ENCODE measurements at regions of chr4 and their contacts with region 1.

Region 1: DNA sequence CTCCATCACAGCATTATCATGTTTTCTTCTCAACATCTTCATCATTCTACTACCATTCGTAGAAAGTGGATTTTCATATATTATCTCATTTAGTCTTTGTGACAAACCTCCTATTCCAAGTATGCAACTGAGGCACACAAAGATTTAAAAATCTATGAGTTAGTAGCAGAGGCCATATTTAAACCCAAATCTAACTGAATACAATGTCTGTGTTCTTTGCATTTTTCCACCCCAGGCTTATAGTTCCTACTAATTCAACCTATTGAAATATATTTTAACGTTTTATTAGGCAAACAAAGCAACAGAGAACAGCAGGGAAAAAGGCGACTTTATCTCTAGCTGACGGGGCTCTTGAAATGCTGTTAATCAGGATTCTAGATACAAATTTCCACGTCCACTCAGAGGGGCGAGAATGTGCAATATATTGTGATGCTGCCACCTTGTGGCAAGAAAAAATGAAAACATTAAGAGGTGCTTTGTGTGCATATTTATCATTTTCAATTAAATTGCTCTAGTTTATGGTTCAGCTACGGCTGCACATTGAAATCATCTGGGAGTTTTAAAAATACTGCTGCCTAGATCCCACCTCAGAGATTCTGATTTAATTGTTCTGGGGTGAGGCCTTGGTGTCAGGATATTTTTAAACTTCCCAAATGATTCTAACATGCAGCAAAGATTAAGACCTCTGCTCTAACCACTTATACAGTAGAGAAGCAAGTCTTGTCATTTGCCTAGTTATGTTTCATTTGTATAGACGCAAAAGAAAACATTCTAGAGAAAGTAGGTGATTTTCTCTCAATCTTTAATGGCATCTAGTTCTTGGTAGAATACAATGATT is 315.9 kb downstream of the MAPK10 start:
- DNase-seq: no peak
- ATAC-seq: peak; percentile 79
- H3K4me3 ChIP-seq: no peak overlapping the region
- H3K27ac ChIP-seq: no peak overlapping the region
- H3K4me1 ChIP-seq: no peaks in the 10 kb centered on the region
- H3K27me3 ChIP-seq: no peaks in the 10 kb centered on the region
- CTCF ChIP-seq: peak; percentile 30 to 58 (median 54); a peak in 5 of 6 replicates
- EP300 ChIP-seq: no peak
- POLR2A ChIP-seq: no peak
- RAD21 ChIP-seq: peak; percentile 69

Region 2: GRCh38 chr4:85084380-85085094 is 959.4 kb before region 1 on chr4:
- CTCF ChIA-PET with region 1: interaction called, 19 read pairs
- POLR2A ChIA-PET with region 1: no interaction called
- RAD21 ChIA-PET with region 1: no interaction called
- SMC1A ChIA-PET with region 1: no interaction called
- in situ Hi-C with region 1: no loop called
- intact Hi-C with region 1: loop called (anchors 10 kb)
- DNase-seq: no peak
- ATAC-seq: peak; percentile 84
- H3K4me3 ChIP-seq: no peak overlapping the region
- H3K27ac ChIP-seq: no peak overlapping the region
- H3K4me1 ChIP-seq: no peaks in the 10 kb centered on the region
- H3K27me3 ChIP-seq: no peaks in the 10 kb centered on the region
- CTCF ChIP-seq: peak; percentile 58 to 60 (median 60)
- EP300 ChIP-seq: no peak
- POLR2A ChIP-seq: no peak
- RAD21 ChIP-seq: peak; percentile 58

Region 3: DNA sequence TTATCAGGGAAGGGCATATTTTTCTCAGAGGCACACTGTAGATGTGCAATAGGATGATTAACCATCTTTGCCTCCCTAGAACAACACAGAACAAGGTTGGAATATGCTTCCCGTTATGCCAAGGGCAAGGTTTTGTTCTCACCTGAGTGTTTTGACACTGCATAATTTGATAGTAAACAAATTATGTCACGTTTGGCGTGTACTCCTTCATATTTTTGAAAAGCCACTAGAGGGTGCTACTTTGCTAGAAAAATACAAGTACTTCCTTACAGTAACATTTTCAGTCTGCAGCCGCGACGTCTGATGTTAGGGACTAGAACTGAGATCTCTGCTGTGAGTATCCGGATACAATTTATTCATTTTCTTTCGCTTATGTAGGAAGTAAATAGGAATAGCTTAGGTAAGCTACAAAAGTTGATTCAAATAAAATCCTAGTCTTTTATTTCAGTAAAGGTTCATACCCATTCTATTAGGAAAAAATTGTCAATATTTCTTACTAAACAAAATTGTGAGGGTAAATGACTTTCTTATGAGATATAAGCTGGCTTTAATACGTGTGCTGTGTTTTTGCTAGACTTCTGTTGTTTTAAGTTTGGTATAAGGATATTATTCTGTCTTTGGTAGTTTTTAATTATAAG is 896.4 kb before region 1 on chr4:
- CTCF ChIA-PET with region 1: interaction called, 4 read pairs
- POLR2A ChIA-PET with region 1: no interaction called
- RAD21 ChIA-PET with region 1: no interaction called
- SMC1A ChIA-PET with region 1: interaction called, 4 read pairs
- in situ Hi-C with region 1: no loop called
- intact Hi-C with region 1: loop called (anchors 5 kb)
- DNase-seq: peak; percentile 11
- ATAC-seq: peak; percentile 93
- H3K4me3 ChIP-seq: no peak overlapping the region
- H3K27ac ChIP-seq: no peak overlapping the region
- H3K4me1 ChIP-seq: no peaks in the 10 kb centered on the region
- H3K27me3 ChIP-seq: no peaks in the 10 kb centered on the region
- CTCF ChIP-seq: peak; percentile 51 to 67 (median 53); a peak in 5 of 6 replicates
- EP300 ChIP-seq: no peak
- POLR2A ChIP-seq: no peak
- RAD21 ChIP-seq: peak; percentile 63

Region 4: DNA sequence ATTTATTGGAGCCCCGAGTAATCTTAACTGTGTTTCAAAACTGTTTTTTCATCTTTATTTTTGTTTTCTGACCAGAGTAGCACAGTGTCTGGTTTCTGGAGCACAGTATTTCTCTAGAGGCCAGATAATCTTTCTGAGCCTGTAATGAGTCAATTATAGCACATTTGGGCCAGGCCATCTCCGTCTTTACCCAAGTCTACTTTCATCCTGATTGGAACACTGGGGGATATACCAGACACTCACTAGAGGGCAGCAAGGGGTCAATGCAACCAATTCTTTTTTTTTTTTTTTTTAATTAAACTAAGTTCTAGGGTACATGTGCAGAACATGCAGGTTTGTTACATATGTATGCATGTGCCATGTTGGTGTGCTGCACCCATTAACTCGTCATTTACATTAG is 287.0 kb before region 1 on chr4:
- CTCF ChIA-PET with region 1: no interaction called
- POLR2A ChIA-PET with region 1: no interaction called
- RAD21 ChIA-PET with region 1: no interaction called
- SMC1A ChIA-PET with region 1: no interaction called
- in situ Hi-C with region 1: no loop called
- intact Hi-C with region 1: loop called (anchors 2 kb)
- DNase-seq: no peak
- ATAC-seq: peak; percentile 79
- H3K4me3 ChIP-seq: no peak overlapping the region
- H3K27ac ChIP-seq: no peak overlapping the region
- H3K4me1 ChIP-seq: no peaks in the 10 kb centered on the region
- H3K27me3 ChIP-seq: no peaks in the 10 kb centered on the region
- CTCF ChIP-seq: peak; percentile 49 to 60 (median 50); a peak in 5 of 6 replicates
- EP300 ChIP-seq: no peak
- POLR2A ChIP-seq: no peak
- RAD21 ChIP-seq: peak; percentile 71

Region 5: DNA sequence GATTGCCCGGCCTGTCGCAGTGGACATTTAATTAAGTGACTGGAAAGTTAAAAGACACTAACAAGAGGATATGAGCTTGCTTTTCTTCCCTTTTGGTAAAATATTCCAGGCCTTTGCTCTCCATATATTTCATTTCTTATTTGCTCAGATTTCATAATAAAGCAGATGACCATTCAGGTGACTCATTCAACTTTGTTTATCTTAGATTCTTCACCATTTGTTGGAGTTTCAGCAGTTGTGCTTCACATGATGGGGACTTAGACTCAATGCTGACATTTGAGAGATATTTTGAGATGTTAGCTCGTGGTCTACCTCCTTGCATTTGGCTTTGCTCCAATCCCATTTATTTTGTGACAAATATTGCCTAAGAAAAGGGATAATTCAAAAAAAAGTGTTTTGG is 256.8 kb before region 1 on chr4:
- CTCF ChIA-PET with region 1: no interaction called
- POLR2A ChIA-PET with region 1: no interaction called
- RAD21 ChIA-PET with region 1: no interaction called
- SMC1A ChIA-PET with region 1: no interaction called
- in situ Hi-C with region 1: no loop called
- intact Hi-C with region 1: loop called (anchors 10 kb)
- DNase-seq: no peak
- ATAC-seq: no peak
- H3K4me3 ChIP-seq: no peak overlapping the region
- H3K27ac ChIP-seq: no peak overlapping the region
- H3K4me1 ChIP-seq: no peaks in the 10 kb centered on the region
- H3K27me3 ChIP-seq: no peaks in the 10 kb centered on the region
- CTCF ChIP-seq: no peak
- EP300 ChIP-seq: no peak
- POLR2A ChIP-seq: no peak
- RAD21 ChIP-seq: no peak

Region 6: DNA sequence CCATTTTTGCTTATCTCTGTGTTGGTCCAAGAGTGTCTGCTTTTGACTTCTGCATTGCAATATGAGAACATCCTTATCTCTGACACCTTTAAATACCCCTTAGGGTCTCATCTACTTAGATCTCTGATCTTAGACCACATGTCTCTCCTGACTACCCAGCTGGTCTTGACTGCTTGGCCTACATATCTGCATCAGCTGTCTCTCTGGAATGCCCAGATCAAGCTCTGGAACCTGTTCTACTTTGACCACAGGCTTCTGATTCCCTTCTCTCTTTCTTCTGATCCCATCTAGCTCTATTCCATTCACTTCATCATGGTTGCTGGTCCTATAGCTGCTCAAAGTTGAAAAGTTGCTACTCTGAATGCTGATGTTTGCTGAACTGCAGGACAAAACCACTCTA is 14.6 kb after region 1 on chr4:
- CTCF ChIA-PET with region 1: interaction called, 16 read pairs
- POLR2A ChIA-PET with region 1: no interaction called
- RAD21 ChIA-PET with region 1: no interaction called
- SMC1A ChIA-PET with region 1: interaction called, 6 read pairs
- in situ Hi-C with region 1: no loop called
- intact Hi-C with region 1: no loop called
- DNase-seq: no peak
- ATAC-seq: no peak
- H3K4me3 ChIP-seq: no peak overlapping the region
- H3K27ac ChIP-seq: no peak overlapping the region
- H3K4me1 ChIP-seq: no peaks in the 10 kb centered on the region
- H3K27me3 ChIP-seq: no peaks in the 10 kb centered on the region
- CTCF ChIP-seq: no peak
- EP300 ChIP-seq: no peak
- POLR2A ChIP-seq: no peak
- RAD21 ChIP-seq: no peak

Region 7: GRCh38 chr4:86250006-86250405 is 206.0 kb after region 1 on chr4:
- CTCF ChIA-PET with region 1: no interaction called
- POLR2A ChIA-PET with region 1: no interaction called
- RAD21 ChIA-PET with region 1: no interaction called
- SMC1A ChIA-PET with region 1: no interaction called
- in situ Hi-C with region 1: no loop called
- intact Hi-C with region 1: no loop called
- DNase-seq: no peak
- ATAC-seq: no peak
- H3K4me3 ChIP-seq: no peak overlapping the region
- H3K27ac ChIP-seq: no peak overlapping the region
- H3K4me1 ChIP-seq: no peaks in the 10 kb centered on the region
- H3K27me3 ChIP-seq: no peaks in the 10 kb centered on the region
- CTCF ChIP-seq: no peak
- EP300 ChIP-seq: no peak
- POLR2A ChIP-seq: no peak
- RAD21 ChIP-seq: no peak

Region 8: GRCh38 chr4:86895692-86896488 is 851.9 kb after region 1 on chr4:
- CTCF ChIA-PET with region 1: no interaction called
- POLR2A ChIA-PET with region 1: no interaction called
- RAD21 ChIA-PET with region 1: no interaction called
- SMC1A ChIA-PET with region 1: no interaction called
- in situ Hi-C with region 1: no loop called
- intact Hi-C with region 1: loop called (anchors 10 kb)
- DNase-seq: no peak
- ATAC-seq: peak; percentile 65
- H3K4me3 ChIP-seq: no peak overlapping the region
- H3K27ac ChIP-seq: no peak overlapping the region
- H3K4me1 ChIP-seq: no peaks in the 10 kb centered on the region
- H3K27me3 ChIP-seq: no peaks in the 10 kb centered on the region
- CTCF ChIP-seq: peak; percentile 52 to 80 (median 66)
- EP300 ChIP-seq: no peak
- POLR2A ChIP-seq: no peak
- RAD21 ChIP-seq: peak; percentile 97